ENCODE measurements at regions of chr2 and their contacts with region 1.

Region 1: DNA sequence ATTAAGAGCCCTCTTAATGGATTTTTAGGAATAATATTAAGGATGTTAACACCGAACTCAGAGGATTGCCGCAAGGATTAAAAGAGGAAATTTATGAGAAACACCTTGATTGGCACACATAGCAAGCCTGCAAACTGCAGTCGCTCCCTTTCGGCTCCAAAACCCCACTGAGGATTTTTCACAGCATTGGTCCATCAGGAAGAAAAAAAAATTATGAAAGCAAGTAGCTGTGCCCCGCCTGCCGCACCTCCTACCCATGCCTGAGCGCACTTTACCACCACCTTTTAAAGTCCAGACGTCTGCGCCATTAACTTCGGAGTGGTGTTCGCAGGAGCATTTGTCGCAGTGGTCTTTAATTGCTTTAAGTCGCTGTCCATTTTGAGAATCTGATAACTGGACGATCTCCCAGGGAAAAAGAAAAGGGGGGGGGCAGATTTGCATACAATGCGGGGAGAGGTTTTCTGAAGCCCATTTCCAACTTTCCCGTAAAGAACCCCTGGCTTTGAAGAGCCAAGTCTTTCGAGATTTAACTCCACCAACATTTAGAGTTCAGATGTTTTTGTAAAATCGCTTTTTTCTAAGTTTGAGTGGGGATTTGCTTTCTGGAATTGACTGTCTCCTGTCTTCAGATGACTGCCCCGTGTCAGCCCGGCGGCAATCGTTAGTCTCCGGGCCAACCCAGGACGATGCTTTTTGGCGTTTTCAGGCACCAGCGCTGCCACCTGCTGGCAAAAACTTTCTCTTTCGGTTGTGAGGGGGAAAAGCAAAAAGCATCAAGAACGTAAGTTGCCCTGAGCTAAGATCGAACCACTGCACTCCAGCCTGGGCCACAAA is 914 bp upstream of the TRABD2A start:
- DNase-seq: peak; percentile 73
- CTCF ChIP-seq: peak; percentile 69

Region 2: GRCh38 chr2:84870306-84870705 is 11.5 kb before region 1 on chr2:
- CTCF ChIA-PET with region 1: interaction called, 17 read pairs
- POLR2A ChIA-PET with region 1: no interaction called
- DNase-seq: no peak
- CTCF ChIP-seq: peak; percentile 21

Region 3: DNA sequence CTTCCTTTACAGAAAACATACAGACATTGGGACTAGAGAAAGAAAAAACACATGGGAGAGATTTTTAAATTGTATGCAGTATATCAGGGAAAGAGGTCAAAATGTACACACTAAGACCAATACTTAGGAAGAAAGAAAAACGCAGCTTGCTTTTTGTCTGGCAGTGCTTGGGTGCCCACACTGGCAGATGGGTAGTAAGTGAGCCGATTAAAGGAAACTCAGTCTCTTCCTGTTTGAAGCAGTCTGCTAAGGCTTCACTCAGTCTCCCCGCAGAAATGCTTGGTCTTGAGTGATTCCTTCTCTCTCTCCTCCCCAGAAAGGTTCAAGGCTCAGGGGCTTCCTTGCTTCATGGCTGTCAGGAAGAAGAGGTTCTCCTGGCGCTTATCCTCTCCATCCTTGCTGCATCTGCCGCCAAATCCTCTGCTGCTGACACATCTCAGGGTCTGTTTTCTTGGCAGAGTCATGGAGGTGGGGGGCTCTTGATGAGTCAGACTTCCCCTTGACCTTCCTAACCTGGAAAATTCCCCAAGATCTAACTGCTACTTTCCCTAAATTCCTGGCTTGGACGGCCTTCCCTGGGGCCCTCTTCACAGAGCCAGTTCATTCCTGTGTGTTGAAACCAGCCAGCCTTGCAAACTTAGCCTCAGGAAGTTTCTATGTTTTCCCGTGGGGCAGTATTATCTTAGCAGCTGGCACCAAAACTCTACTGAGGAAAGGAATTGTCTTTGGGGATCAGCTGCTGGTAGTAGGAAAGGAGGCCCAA is 13.1 kb after region 1 on chr2:
- CTCF ChIA-PET with region 1: interaction called, 21 read pairs
- POLR2A ChIA-PET with region 1: no interaction called
- DNase-seq: no peak
- CTCF ChIP-seq: no peak